HEK293 (cell line): ENCODE measurements at regions of chr1 and their contacts with region 1.

Region 1: DNA sequence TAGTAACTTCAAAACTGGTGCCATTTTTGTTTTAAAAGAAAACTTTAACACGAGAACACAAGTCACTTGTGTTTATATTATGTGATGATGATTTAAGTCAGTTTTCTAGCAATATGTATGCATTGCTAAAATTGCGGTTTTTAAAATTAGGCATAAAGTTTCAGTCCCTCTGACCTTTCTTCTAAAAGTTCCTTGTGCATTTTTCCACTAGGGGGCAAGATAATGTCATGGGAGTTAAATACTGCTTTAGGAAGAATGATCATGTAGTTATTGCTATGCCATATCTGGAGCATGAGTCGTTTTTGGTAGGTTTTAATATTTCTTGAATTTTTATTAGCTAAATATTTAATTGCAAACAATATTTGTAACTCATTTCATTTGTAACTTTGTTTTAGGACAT is 10.7 kb downstream of the CDC7 start:
- H3K4me3 ChIP-seq: no peak overlapping the region
- H3K27ac ChIP-seq: no peak overlapping the region
- H3K4me1 ChIP-seq: no peaks in the 10 kb centered on the region
- CTCF ChIP-seq: no peak

Region 2: DNA sequence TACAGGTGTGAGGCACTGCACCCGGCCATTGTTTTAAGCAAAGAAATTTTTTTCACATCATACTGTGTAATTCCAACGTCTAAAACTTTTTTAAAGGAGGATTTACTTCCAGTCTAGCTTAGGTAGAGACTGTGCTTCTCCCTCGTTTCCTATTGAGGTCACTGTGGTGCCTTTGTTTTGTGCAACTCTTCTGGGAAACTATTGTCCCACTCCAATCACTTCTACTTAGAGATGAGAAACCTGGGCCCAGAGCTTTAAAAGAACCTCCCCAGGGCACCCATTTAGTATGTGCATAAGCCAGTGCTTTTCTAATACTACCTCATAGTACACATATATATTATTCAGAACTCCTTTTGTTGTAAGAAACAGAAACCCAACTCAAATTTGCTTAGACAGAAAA is 369.5 kb before region 1 on chr1:
- CTCF ChIA-PET with region 1: no interaction called
- POLR2A ChIA-PET with region 1: no interaction called
- H3K4me3 ChIP-seq: no peak overlapping the region
- H3K27ac ChIP-seq: no peak overlapping the region
- H3K4me1 ChIP-seq: no peaks in the 10 kb centered on the region
- CTCF ChIP-seq: no peak

Region 3: GRCh38 chr1:91500756-91501522 is 10.4 kb before region 1 on chr1 and contains the start of gene CDC7:
- CTCF ChIA-PET with region 1: interaction called, 21 read pairs
- POLR2A ChIA-PET with region 1: no interaction called
- H3K4me3 ChIP-seq: peak within 1 kb of the TSS; percentile 80
- H3K27ac ChIP-seq: peak within 1 kb of the TSS; percentile 94
- H3K4me1 ChIP-seq: no peaks in the 10 kb centered on the region
- CTCF ChIP-seq: no peak; the same call in 1 of the 2 replicates

Region 4: GRCh38 chr1:91523482-91523881 is 12.1 kb after region 1 on chr1:
- CTCF ChIA-PET with region 1: interaction called, 12 read pairs
- POLR2A ChIA-PET with region 1: no interaction called
- H3K4me3 ChIP-seq: no peak overlapping the region
- H3K27ac ChIP-seq: no peak overlapping the region
- H3K4me1 ChIP-seq: no peaks in the 10 kb centered on the region
- CTCF ChIP-seq: no peak

Region 5: GRCh38 chr1:91929250-91929649 is 417.9 kb after region 1 on chr1:
- CTCF ChIA-PET with region 1: interaction called, 18 read pairs
- POLR2A ChIA-PET with region 1: no interaction called
- H3K4me3 ChIP-seq: no peak overlapping the region
- H3K27ac ChIP-seq: no peak overlapping the region
- H3K4me1 ChIP-seq: no peaks in the 10 kb centered on the region
- CTCF ChIP-seq: no peak